Activated B cell treated with CpG ODN at 0.5 μM for 24 hours (primary cell): ENCODE measurements at regions of chr19 and their contacts with region 1.

Region 1: DNA sequence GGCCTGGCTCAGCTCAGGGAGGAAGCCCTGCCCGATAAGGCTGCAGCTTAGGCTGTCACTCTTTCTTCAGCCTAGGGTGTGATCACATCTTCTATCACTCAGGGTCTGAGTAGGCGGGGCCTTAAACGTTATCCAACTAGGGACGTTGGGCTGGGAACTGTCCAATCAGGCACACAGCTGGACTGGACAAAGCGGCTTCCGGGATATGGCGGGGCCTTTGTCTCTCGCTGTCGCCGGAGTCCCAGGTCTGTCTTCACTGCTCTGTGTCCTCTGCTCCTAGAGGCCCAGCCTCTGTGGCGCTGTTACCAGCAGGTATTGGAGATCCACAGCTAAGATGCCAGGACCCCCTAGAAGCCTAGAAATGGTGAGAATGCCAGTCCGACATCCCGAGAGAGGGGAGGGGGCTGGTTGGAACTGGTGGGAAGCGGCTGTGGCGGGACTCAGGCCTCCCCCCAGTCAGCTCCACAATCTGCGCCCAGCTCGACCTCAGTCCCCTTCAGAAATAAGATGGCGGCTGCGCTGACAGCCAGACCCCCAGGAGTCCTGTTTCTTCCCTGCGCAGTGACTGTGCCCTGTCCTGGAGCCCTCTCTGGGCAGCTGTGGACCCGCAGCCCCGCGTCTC is at the start of gene ZNF254:
- DNase-seq: peak; percentile 67
- ATAC-seq: peak; percentile 99
- H3K4me3 Mint-ChIP-seq: peak within 1 kb of the TSS; percentile 98
- H3K27ac Mint-ChIP-seq: peak within 1 kb of the TSS; percentile 97
- H3K4me1 Mint-ChIP-seq: peaks cover 10% of the 10 kb centered on the region
- H3K27me3 Mint-ChIP-seq: no peaks in the 10 kb centered on the region
- CTCF ChIP-seq: no peak
- total RNA-seq, gene ZNF254: 21.5 and 28.8 TPM in 2 replicates

Region 2: GRCh38 chr19:23273590-23274413 is 813.3 kb before region 1 on chr19:
- CTCF ChIA-PET with region 1: no interaction called
- POLR2A ChIA-PET with region 1: interaction called, 6 read pairs
- intact Hi-C with region 1: loop called (anchors 5 kb)
- DNase-seq: peak; percentile 89
- ATAC-seq: peak; percentile 98
- H3K4me3 Mint-ChIP-seq: peak overlapping the region; percentile 97
- H3K27ac Mint-ChIP-seq: peak overlapping the region; percentile 90
- H3K4me1 Mint-ChIP-seq: peaks cover 30% of the 10 kb centered on the region
- H3K27me3 Mint-ChIP-seq: no peaks in the 10 kb centered on the region
- CTCF ChIP-seq: no peak

Region 3: DNA sequence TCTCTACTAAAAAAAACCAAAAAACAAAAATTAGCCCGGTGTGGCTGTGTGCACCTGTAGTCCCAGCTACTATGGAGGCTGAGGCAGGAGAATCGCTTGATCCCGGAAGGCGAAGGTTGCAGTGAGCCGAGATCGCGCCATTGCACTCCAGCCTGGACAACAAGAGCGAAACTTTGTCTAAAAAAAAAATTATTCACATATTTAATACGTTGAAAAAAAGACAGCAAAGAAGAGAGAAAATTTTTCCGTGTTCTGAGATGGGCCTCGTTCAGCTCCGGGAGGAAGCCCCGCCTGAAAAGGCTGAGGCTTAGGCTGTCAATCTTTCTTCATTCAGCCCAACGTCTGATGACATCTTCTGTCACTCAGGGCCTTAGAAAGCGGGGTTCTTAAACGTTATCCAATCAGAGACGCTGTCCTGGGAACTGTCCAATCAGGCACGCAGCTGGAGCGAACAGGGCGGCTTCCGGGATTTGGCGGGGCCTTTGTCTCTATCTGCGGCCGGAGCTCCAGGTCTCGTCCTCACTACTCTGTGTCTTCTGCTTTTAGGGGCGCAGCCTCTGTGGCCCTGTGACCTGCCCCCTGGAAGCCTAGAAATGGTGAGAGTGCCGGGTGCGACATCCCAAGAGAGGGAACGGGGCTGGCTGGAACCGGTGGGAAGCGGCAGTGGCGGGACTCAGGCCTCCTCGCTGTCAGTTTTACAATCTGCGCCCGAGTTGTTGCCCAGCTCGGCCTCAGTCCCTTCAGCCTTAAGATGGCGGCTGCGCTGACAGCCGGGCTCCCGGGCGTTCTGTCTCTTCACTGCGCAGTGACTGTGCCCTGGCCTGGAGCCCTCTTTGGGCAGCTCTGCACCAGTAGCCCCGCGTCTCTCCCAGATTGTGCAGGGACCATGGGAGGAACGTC is 172.4 kb before region 1 on chr19 and contains the start of gene ZNF726:
- CTCF ChIA-PET with region 1: no interaction called
- POLR2A ChIA-PET with region 1: interaction called, 13 read pairs
- intact Hi-C with region 1: loop called (anchors 1 kb)
- DNase-seq: peak; percentile 67
- ATAC-seq: peak; percentile 97
- H3K4me3 Mint-ChIP-seq: peak within 1 kb of the TSS; percentile 96
- H3K27ac Mint-ChIP-seq: peak within 1 kb of the TSS; percentile 83
- H3K4me1 Mint-ChIP-seq: peaks cover 10% of the 10 kb centered on the region
- H3K27me3 Mint-ChIP-seq: no peaks in the 10 kb centered on the region
- CTCF ChIP-seq: no peak
- total RNA-seq, gene ZNF726: 8.2 and 9.4 TPM in 2 replicates

Region 4: DNA sequence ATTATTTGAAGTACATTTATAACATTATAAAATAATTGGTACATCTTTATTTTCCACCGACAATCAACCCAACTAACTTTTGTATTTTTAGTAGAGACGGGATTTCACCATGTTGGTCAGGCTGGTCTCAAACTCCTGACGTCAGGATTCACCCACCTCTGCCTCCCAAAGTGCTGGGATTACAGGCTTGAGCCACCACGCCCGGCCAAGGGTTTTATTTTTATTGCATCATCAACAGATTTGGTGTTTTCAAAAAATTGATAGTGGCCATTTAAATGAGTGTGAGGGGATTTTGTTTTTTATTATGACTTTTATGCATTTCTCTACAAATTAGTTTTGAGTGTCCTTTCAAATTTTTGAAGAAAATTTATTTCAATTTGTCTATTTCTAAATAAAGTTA is 161.8 kb before region 1 on chr19:
- CTCF ChIA-PET with region 1: no interaction called
- POLR2A ChIA-PET with region 1: no interaction called
- intact Hi-C with region 1: no loop called
- DNase-seq: no peak
- ATAC-seq: no peak
- H3K4me3 Mint-ChIP-seq: no peak overlapping the region
- H3K27ac Mint-ChIP-seq: no peak overlapping the region
- H3K4me1 Mint-ChIP-seq: no peaks in the 10 kb centered on the region
- H3K27me3 Mint-ChIP-seq: no peaks in the 10 kb centered on the region
- CTCF ChIP-seq: no peak

Region 5: GRCh38 chr19:24033301-24033962 is 53.7 kb before region 1 on chr19:
- CTCF ChIA-PET with region 1: no interaction called
- POLR2A ChIA-PET with region 1: interaction called, 41 read pairs
- intact Hi-C with region 1: loop called (anchors 1 kb)
- DNase-seq: peak; percentile 63
- ATAC-seq: peak; percentile 97
- H3K4me3 Mint-ChIP-seq: peak overlapping the region; percentile 100
- H3K27ac Mint-ChIP-seq: peak overlapping the region; percentile 97
- H3K4me1 Mint-ChIP-seq: peaks cover 42% of the 10 kb centered on the region
- H3K27me3 Mint-ChIP-seq: no peaks in the 10 kb centered on the region
- CTCF ChIP-seq: no peak